Endothelial cell of umbilical vein (primary cell): ENCODE measurements at regions of chr15 and their contacts with region 1.

Region 1: GRCh38 chr15:84588053-84588874 is 12.5 kb upstream of the ZSCAN2 start:
- DNase-seq: peak; percentile 72
- H3K4me3 ChIP-seq: peak overlapping the region in 2 of 3 experiments; percentile 24 to 58
- H3K27ac ChIP-seq: no peak overlapping the region
- H3K4me1 ChIP-seq: peaks cover 5% of the 10 kb centered on the region
- H3K27me3 ChIP-seq: peaks cover 0 to 4% of the 10 kb centered on the region in 2 experiments
- CTCF ChIP-seq: peak; percentile 43 to 82
- POLR2A ChIP-seq: no peak

Region 2: GRCh38 chr15:84633311-84634227 is 45.3 kb after region 1 on chr15:
- CTCF ChIA-PET with region 1: interaction called, 4 read pairs
- POLR2A ChIA-PET with region 1: no interaction called
- dilution Hi-C with region 1: no loop called
- intact Hi-C with region 1: loop called (anchors 1 kb)
- DNase-seq: peak; percentile 85
- H3K4me3 ChIP-seq: peak overlapping the region; percentile 44 to 66 (median 46)
- H3K27ac ChIP-seq: peak overlapping the region; percentile 28
- H3K4me1 ChIP-seq: peaks cover 26% of the 10 kb centered on the region
- H3K27me3 ChIP-seq: no peaks in the 10 kb centered on the region
- CTCF ChIP-seq: no peak
- POLR2A ChIP-seq: no peak

Region 3: GRCh38 chr15:84844964-84845363 is 256.7 kb after region 1 on chr15:
- CTCF ChIA-PET with region 1: interaction called, 3 read pairs
- POLR2A ChIA-PET with region 1: no interaction called
- dilution Hi-C with region 1: no loop called
- intact Hi-C with region 1: loop called (anchors 1 kb)
- DNase-seq: no peak
- H3K4me3 ChIP-seq: no peak overlapping the region
- H3K27ac ChIP-seq: no peak overlapping the region
- H3K4me1 ChIP-seq: no peaks in the 10 kb centered on the region
- H3K27me3 ChIP-seq: no peaks in the 10 kb centered on the region
- CTCF ChIP-seq: no peak
- POLR2A ChIP-seq: no peak

Region 4: DNA sequence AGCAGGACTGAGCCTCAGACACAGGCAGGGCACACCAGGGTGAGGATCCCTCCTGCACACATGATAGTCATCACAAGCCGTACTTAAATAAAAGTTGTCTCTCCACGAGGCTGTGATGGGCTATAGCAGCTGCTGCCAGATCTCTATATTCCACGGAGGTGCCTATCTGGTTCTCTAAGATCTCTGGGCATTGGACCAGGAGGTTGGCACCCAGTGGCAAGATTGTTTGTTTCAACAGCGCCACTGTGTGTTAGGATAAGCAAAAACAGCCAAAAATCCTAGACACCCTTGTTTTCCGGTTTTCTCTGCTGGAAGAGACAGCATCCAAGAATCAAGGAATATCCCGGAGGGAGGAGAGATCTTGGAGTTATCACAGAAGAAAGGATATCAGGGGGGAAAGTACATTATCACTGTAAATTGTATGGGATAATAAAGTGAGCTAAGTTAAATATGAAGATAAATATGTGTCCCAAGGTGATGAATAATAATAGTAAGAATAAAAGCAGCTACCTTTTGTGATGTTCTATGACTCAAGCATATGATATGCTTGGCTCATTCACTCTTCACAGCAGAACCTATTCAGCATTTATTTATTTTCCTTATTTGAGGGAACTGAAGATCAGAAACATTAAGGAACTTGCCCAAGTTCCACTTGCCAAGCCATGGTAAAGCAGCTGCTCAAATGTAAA is 701.6 kb after region 1 on chr15:
- CTCF ChIA-PET with region 1: interaction called, 7 read pairs
- POLR2A ChIA-PET with region 1: no interaction called
- dilution Hi-C with region 1: no loop called
- intact Hi-C with region 1: loop called (anchors 1 kb)
- DNase-seq: peak; percentile 46
- H3K4me3 ChIP-seq: no peak overlapping the region
- H3K27ac ChIP-seq: no peak overlapping the region
- H3K4me1 ChIP-seq: no peaks in the 10 kb centered on the region
- H3K27me3 ChIP-seq: peaks cover 10 to 18% of the 10 kb centered on the region in 2 experiments
- CTCF ChIP-seq: peak; percentile 45 to 49
- POLR2A ChIP-seq: no peak